HCT116 (cell line): ENCODE measurements at regions of chr2 and their contacts with region 1.

Region 1: GRCh38 chr2:24409700-24410556 is 49.6 kb upstream of the ITSN2 start:
- DNase-seq: peak; percentile 67
- ATAC-seq: peak; percentile 97
- H3K4me3 ChIP-seq: no peak overlapping the region
- H3K27ac ChIP-seq: no peak overlapping the region
- H3K4me1 ChIP-seq: no peaks in the 10 kb centered on the region; a peak in 1 of 4 replicates
- H3K27me3 ChIP-seq: no peaks in the 10 kb centered on the region
- CTCF ChIP-seq: peak; percentile 86 to 89 (median 87)
- POLR2A ChIP-seq: no peak
- RAD21 ChIP-seq: peak; percentile 93

Region 2: DNA sequence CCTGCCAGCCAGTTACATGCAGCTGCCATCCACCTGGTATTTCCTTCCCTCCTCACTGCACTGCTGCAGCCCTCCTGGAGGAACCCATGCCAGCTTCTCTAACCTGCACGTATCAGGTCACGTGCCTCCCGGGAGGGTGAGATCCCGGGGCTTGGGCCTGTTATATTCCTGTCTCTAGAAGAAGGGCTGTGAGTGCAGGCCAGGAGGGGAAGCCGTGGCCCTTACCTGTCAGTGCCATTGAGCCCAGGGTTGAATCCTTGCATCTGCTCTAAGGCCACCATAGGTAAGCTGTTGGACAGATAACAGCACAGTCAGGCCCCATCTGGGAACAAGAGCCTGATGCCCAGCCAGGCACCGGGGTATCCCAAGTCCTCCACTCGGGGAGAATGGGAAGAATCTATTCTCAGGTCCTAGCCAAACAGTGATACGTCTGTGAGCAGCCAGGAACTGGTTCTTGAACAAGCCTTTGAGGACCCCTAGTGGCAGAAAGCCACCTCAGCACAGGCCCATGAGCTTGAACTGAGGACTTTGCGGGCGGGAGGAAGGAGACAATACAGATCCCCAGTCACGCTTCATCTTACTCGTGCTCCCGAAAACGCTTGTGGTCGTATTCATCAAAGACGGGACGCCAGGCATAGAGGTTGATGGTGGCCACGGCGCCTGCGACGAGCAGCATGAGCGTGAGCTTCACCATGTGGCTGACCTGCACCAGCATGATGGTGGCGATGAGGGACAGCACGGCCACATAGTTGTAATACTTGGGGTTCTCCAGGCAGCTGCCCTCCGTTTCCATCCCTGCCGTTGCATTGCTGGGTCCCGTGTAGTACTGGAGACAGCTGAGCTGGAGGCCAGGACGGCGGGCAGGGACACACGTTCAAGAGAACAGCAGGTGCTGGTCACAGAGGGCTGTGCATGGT is 417.7 kb after region 1 on chr2:
- CTCF ChIA-PET with region 1: interaction called, 38 read pairs
- POLR2A ChIA-PET with region 1: no interaction called
- RAD21 ChIA-PET with region 1: interaction called in 1 of 2 experiments, 6 read pairs
- intact Hi-C with region 1: loop called (anchors 1 kb)
- DNase-seq: peak; percentile 61
- ATAC-seq: peak; percentile 87
- H3K4me3 ChIP-seq: no peak overlapping the region
- H3K27ac ChIP-seq: no peak overlapping the region
- H3K4me1 ChIP-seq: no peaks in the 10 kb centered on the region
- H3K27me3 ChIP-seq: no peaks in the 10 kb centered on the region
- CTCF ChIP-seq: peak; percentile 77 to 92 (median 91)
- POLR2A ChIP-seq: no peak
- RAD21 ChIP-seq: peak; percentile 94

Region 3: DNA sequence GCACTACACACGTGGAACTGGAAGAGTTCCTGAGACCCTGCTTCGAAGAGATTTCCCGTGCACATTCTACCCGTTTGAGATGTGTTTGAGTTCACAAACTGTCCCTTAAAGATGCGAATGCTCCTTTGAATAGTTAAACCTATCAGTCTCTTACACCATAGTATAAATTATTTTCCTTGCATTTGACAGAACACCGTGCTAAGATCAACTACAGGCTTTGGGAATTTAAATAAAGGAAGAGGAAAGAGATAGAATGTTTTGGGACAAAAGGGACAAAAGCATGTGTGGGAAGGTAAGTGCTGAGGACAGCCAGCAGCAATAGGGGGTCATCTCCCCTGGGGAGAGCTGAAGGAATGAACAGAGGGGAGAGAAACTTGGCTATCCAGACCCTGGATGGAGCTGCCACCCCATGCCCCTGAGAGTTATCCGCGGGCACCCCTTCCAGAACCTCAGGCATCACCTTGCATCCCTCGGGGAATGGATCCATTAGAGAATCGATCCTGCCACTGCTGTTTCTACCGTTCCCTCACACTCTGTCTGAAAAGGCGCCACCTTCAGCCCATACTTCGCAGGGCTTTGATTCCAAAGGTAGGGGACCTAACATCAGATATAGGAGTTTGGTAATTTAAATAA is 511.0 kb after region 1 on chr2:
- CTCF ChIA-PET with region 1: no interaction called
- POLR2A ChIA-PET with region 1: no interaction called
- RAD21 ChIA-PET with region 1: no interaction called
- intact Hi-C with region 1: loop called (anchors 1 kb)
- DNase-seq: no peak
- ATAC-seq: peak; percentile 64
- H3K4me3 ChIP-seq: peak overlapping the region; percentile 61 to 66
- H3K27ac ChIP-seq: peak overlapping the region; percentile 54
- H3K4me1 ChIP-seq: peaks cover 5 to 20% of the 10 kb centered on the region in 2 experiments; a peak in 3 of 4 replicates
- H3K27me3 ChIP-seq: no peaks in the 10 kb centered on the region
- CTCF ChIP-seq: peak; percentile 44 to 69 (median 64); a peak in 5 of 6 replicates
- POLR2A ChIP-seq: no peak
- RAD21 ChIP-seq: no peak; the same call in 1 of the 2 replicates

Region 4: GRCh38 chr2:25131567-25132298 is 721.8 kb after region 1 on chr2:
- CTCF ChIA-PET with region 1: interaction called, 10 read pairs
- POLR2A ChIA-PET with region 1: no interaction called
- RAD21 ChIA-PET with region 1: interaction called in 1 of 2 experiments, 3 read pairs
- intact Hi-C with region 1: loop called (anchors 2 kb)
- DNase-seq: no peak
- ATAC-seq: no peak
- H3K4me3 ChIP-seq: no peak overlapping the region
- H3K27ac ChIP-seq: no peak overlapping the region
- H3K4me1 ChIP-seq: peaks cover 0 to 3% of the 10 kb centered on the region in 2 experiments; a peak in 1 of 4 replicates
- H3K27me3 ChIP-seq: 0 out of 2 replicates have a peak, but pooled peaks cover 4% of the 10 kb centered on the region
- CTCF ChIP-seq: no peak
- POLR2A ChIP-seq: no peak
- RAD21 ChIP-seq: no peak

Region 5: GRCh38 chr2:25201265-25201664 is 791.3 kb after region 1 on chr2:
- CTCF ChIA-PET with region 1: interaction called, 3 read pairs
- POLR2A ChIA-PET with region 1: no interaction called
- RAD21 ChIA-PET with region 1: no interaction called
- intact Hi-C with region 1: loop called (anchors 2 kb)
- DNase-seq: peak; percentile 16
- ATAC-seq: peak; percentile 85
- H3K4me3 ChIP-seq: no peak overlapping the region
- H3K27ac ChIP-seq: no peak overlapping the region
- H3K4me1 ChIP-seq: 0 out of 4 replicates have a peak, but pooled peaks cover 0 to 4% of the 10 kb centered on the region in 2 experiments
- H3K27me3 ChIP-seq: no peaks in the 10 kb centered on the region
- CTCF ChIP-seq: peak in 2 of 3 experiments; percentile 46 to 54; a peak in 4 of 6 replicates
- POLR2A ChIP-seq: no peak
- RAD21 ChIP-seq: no peak